ENCODE measurements at regions of chr16 and their contacts with region 1.

Region 1: DNA sequence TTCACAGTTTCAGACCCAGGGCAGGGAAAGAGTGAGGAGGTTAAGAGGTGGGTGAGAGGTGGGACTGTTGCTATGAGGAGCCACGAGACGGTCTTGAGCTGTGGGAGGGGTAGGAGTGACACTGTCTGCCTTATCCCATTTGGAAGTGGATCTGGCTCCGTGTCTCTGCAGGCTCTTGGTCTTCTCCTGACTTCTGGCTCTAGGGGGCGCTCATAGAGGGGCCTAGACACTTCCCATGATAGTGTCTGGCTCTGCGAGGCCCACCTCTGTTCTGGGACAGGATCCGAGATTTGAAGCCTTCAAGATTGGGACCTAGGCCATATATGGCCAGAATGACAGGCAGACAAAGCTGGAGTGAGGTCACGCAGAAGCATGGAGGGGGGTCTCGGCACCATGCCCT is 204.5 kb downstream of the GSG1L start:
- DNase-seq: no peak
- ATAC-seq: no peak
- H3K4me3 ChIP-seq: no peak overlapping the region
- H3K27ac ChIP-seq: no peak overlapping the region
- H3K4me1 ChIP-seq: no peaks in the 10 kb centered on the region
- H3K27me3 ChIP-seq: no peaks in the 10 kb centered on the region

Region 2: DNA sequence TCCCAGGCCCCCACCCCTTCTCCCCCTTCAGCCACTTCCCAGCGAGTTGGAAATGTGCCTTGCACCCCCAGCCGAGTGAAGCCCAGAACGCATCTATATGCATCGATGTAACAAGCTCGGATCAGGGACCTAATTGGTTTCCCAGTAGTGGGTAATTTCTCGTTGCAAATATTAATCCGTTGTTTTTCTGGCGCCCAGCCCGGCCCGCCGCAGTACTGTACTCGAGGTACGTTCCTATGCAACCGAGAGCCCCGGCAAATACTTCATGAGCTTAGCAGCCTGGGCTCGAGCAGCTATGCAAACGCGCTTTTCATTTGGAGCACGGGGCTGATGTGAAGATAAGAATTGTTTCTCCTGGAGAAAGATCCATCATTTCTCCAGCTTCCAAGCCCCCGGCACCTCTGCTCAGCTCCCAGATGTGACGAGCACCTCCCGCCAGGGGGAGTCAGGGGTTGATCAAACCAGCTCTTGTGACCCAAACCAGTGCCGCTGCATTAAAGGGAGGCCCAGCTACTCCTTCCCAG is 79.3 kb before region 1 on chr16:
- intact Hi-C with region 1: no loop called
- DNase-seq: peak in 1 of 2 donors; percentile 81
- ATAC-seq: no peak
- H3K4me3 ChIP-seq: no peak overlapping the region
- H3K27ac ChIP-seq: no peak overlapping the region
- H3K4me1 ChIP-seq: no peaks in the 10 kb centered on the region
- H3K27me3 ChIP-seq: no peaks in the 10 kb centered on the region

Region 3: GRCh38 chr16:27795992-27796614 is 62.9 kb before region 1 on chr16:
- intact Hi-C with region 1: loop called in 1 of 2 experiments (anchors 10 kb)
- DNase-seq: peak in 1 of 2 donors; percentile 87
- ATAC-seq: no peak
- H3K4me3 ChIP-seq: no peak overlapping the region
- H3K27ac ChIP-seq: no peak overlapping the region
- H3K4me1 ChIP-seq: no peaks in the 10 kb centered on the region
- H3K27me3 ChIP-seq: no peaks in the 10 kb centered on the region

Measured in aorta (tissue), 5 donors.